MCF 10A (cell line): ENCODE measurements at regions of chr19 and their contacts with region 1.

Region 1: GRCh38 chr19:42926781-42927180 is 9.1 kb upstream of the PSG6 start:
- DNase-seq: no peak
- H3K4me3 Mint-ChIP-seq: no peak overlapping the region
- H3K27ac Mint-ChIP-seq: no peak overlapping the region
- H3K4me1 Mint-ChIP-seq: no peaks in the 10 kb centered on the region
- H3K27me3 Mint-ChIP-seq: no peaks in the 10 kb centered on the region
- CTCF ChIP-seq: no peak

Region 2: GRCh38 chr19:42816894-42817293 is 109.9 kb before region 1 on chr19:
- CTCF ChIA-PET with region 1: no interaction called
- POLR2A ChIA-PET with region 1: no interaction called
- intact Hi-C with region 1: no loop called
- DNase-seq: no peak
- H3K4me3 Mint-ChIP-seq: no peak overlapping the region
- H3K27ac Mint-ChIP-seq: no peak overlapping the region
- H3K4me1 Mint-ChIP-seq: peaks cover 14% of the 10 kb centered on the region
- H3K27me3 Mint-ChIP-seq: no peaks in the 10 kb centered on the region
- CTCF ChIP-seq: no peak

Region 3: GRCh38 chr19:42872578-42872977 is 54.2 kb before region 1 on chr19:
- CTCF ChIA-PET with region 1: no interaction called
- POLR2A ChIA-PET with region 1: no interaction called
- intact Hi-C with region 1: no loop called
- DNase-seq: no peak
- H3K4me3 Mint-ChIP-seq: no peak overlapping the region
- H3K27ac Mint-ChIP-seq: no peak overlapping the region
- H3K4me1 Mint-ChIP-seq: peaks cover 29% of the 10 kb centered on the region
- H3K27me3 Mint-ChIP-seq: no peaks in the 10 kb centered on the region
- CTCF ChIP-seq: peak; percentile 19

Region 4: GRCh38 chr19:43028861-43029260 is 102.1 kb after region 1 on chr19:
- CTCF ChIA-PET with region 1: no interaction called
- POLR2A ChIA-PET with region 1: no interaction called
- intact Hi-C with region 1: loop called (anchors 2 kb)
- DNase-seq: no peak
- H3K4me3 Mint-ChIP-seq: no peak overlapping the region
- H3K27ac Mint-ChIP-seq: no peak overlapping the region
- H3K4me1 Mint-ChIP-seq: no peaks in the 10 kb centered on the region
- H3K27me3 Mint-ChIP-seq: no peaks in the 10 kb centered on the region
- CTCF ChIP-seq: no peak

Region 5: GRCh38 chr19:43070875-43071274 is 144.1 kb after region 1 on chr19:
- CTCF ChIA-PET with region 1: no interaction called
- POLR2A ChIA-PET with region 1: no interaction called
- intact Hi-C with region 1: no loop called
- DNase-seq: no peak
- H3K4me3 Mint-ChIP-seq: no peak overlapping the region
- H3K27ac Mint-ChIP-seq: no peak overlapping the region
- H3K4me1 Mint-ChIP-seq: no peaks in the 10 kb centered on the region
- H3K27me3 Mint-ChIP-seq: peaks cover 64% of the 10 kb centered on the region
- CTCF ChIP-seq: no peak